ENCODE measurements at regions of chr12 and their contacts with region 1.

Region 1: DNA sequence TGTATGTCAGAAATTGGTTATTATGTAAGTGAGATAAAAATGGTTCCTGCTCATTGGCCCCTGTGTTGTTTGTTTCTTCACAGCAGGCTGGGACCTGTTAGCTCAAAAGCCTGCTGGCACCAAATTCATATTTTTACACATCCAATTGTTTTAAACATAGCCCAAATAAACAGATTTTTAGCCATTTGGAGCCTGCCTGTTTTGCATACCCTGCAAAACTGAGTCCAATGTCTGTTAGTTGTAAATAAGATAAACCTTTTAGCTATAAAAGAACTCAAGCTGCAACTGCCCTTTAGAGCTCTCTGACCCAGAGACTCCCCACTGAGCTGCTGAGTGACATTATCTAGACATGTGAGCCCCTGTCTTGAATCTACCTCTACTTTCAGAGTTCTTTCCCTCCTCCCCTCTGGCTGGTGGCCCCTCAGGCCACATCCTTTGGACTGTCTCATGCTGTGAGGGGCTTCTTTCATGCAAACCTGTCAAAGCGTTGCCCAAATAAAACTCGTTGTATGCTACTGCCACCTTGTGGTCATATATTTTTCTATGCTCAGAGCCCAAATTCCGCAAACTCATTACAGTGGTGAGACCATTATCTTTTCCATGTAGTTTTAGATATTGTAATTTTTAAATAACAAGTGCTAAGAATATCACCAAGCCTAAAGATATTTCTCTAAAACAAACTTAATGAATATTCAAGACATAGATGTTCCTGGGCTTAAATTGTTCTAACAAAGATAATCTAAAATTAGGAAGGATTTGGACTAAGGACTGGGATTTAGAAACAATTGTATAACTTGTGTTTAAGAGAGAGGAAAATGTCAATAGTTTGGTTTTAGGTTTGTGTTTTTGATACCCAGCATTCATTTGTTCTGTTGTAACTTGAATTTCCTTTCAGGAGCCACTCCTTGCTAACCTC is 337.9 kb downstream of the AACS start:
- DNase-seq: no peak
- ATAC-seq: 0 out of 2 replicates have a peak, but pooled peaks have one; percentile 66
- H3K4me3 ChIP-seq: no peak overlapping the region
- H3K27ac ChIP-seq: no peak overlapping the region
- H3K4me1 ChIP-seq: no peaks in the 10 kb centered on the region
- H3K27me3 ChIP-seq: peaks cover 12% of the 10 kb centered on the region
- CTCF ChIP-seq: peak; percentile 80

Region 2: DNA sequence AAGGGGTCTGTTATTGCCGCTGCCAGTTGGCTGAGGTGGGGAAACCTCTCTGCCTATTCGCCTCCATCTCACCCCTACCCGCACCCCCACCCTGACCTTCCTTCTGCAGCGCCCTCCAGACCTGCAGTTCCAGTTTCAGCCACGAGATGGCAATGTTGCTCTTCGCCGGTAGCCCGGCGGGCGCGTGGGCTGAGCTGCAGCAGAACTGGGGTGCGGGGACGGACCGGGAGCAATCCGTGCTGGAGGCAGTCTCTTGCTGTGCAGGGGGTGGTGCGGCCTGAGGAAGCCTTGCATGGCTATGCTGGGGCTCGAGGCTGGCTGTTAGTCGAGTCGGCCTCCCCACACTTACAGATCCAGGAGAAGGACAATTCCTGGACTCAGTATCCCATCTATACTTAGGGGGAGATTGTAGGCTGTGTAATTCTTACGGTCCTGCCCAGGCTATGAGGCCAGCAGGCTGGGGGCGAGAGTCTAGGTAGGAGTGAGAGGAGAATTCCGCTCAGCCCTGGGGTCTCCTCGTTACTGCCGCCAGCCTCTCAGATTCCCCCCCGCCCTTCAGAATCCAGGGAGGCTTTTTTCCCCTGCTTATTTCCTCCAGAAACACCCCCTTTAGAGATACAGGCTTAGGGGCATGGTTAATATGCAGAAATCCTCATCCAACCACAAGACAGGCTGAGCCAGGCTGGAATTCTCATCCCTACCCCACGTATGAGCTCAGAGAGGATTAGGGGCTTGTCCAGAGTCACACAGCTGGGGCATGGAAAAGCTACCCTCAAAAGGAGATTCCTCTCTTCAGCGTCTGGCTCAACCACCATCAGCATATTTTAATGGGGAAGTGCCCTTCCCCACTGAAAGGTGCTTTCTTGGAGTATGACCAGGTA is 219.7 kb before region 1 on chr12:
- CTCF ChIA-PET with region 1: interaction called, 3 read pairs
- POLR2A ChIA-PET with region 1: no interaction called
- in situ Hi-C with region 1: no loop called
- intact Hi-C with region 1: loop called (anchors 1 kb)
- DNase-seq: peak; percentile 41
- ATAC-seq: peak; percentile 76
- H3K4me3 ChIP-seq: no peak overlapping the region
- H3K27ac ChIP-seq: no peak overlapping the region
- H3K4me1 ChIP-seq: peaks cover 17% of the 10 kb centered on the region
- H3K27me3 ChIP-seq: peaks cover 24% of the 10 kb centered on the region
- CTCF ChIP-seq: peak; percentile 99

Region 3: GRCh38 chr12:125240717-125241116 is 162.4 kb before region 1 on chr12:
- CTCF ChIA-PET with region 1: interaction called, 6 read pairs
- POLR2A ChIA-PET with region 1: no interaction called
- in situ Hi-C with region 1: no loop called
- intact Hi-C with region 1: loop called (anchors 1 kb)
- DNase-seq: no peak
- ATAC-seq: no peak
- H3K4me3 ChIP-seq: no peak overlapping the region
- H3K27ac ChIP-seq: no peak overlapping the region
- H3K4me1 ChIP-seq: peaks cover 1% of the 10 kb centered on the region; the same call in 1 of the 2 replicates
- H3K27me3 ChIP-seq: peaks cover 6% of the 10 kb centered on the region
- CTCF ChIP-seq: no peak

Region 4: DNA sequence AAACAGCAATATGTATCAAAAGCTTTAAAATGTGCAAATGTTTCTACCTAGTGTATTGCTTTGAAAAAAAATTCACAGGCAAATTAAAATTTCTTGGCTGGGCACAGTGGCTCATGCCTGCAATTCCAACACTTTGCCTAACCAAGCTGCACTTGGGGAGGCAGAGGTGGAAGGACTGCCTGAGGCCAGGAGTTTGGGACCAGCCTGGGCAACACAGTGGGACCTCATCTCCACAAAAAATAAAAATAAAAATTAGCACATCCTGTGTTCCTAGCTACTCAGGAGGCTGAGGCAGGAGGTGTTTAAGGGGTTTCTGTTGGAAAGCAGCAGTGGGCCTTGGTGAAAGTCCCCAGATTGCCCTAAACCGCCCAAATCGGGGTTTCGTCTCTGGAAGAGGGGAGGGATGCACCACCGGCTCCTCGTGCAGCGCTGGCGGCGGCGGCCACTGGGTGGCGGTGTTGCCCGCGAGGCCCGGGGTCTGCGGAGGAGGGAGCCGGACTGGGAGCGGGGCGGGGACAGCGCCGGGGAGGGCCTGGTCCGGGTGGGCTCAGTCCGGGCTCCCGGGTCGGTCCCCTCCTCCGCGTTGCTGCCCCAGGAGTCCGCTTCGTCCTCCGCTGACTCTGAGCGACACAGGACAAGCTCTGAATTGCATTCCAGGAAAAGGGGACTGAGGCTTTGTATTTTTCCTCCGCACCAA is 72.3 kb before region 1 on chr12:
- CTCF ChIA-PET with region 1: no interaction called
- POLR2A ChIA-PET with region 1: no interaction called
- in situ Hi-C with region 1: no loop called
- intact Hi-C with region 1: loop called (anchors 1 kb)
- DNase-seq: no peak
- ATAC-seq: peak; percentile 98
- H3K4me3 ChIP-seq: peak overlapping the region; percentile 36 to 69
- H3K27ac ChIP-seq: no peak overlapping the region
- H3K4me1 ChIP-seq: no peaks in the 10 kb centered on the region
- H3K27me3 ChIP-seq: peaks cover 4% of the 10 kb centered on the region
- CTCF ChIP-seq: peak; percentile 99

Region 5: GRCh38 chr12:125434936-125435443 is 31.9 kb after region 1 on chr12:
- CTCF ChIA-PET with region 1: no interaction called
- POLR2A ChIA-PET with region 1: no interaction called
- in situ Hi-C with region 1: no loop called
- intact Hi-C with region 1: no loop called
- DNase-seq: no peak
- ATAC-seq: no peak
- H3K4me3 ChIP-seq: no peak overlapping the region
- H3K27ac ChIP-seq: no peak overlapping the region
- H3K4me1 ChIP-seq: no peaks in the 10 kb centered on the region
- H3K27me3 ChIP-seq: no peaks in the 10 kb centered on the region
- CTCF ChIP-seq: no peak